ENCODE measurements at regions of chr2 and their contacts with region 1.

Region 1: DNA sequence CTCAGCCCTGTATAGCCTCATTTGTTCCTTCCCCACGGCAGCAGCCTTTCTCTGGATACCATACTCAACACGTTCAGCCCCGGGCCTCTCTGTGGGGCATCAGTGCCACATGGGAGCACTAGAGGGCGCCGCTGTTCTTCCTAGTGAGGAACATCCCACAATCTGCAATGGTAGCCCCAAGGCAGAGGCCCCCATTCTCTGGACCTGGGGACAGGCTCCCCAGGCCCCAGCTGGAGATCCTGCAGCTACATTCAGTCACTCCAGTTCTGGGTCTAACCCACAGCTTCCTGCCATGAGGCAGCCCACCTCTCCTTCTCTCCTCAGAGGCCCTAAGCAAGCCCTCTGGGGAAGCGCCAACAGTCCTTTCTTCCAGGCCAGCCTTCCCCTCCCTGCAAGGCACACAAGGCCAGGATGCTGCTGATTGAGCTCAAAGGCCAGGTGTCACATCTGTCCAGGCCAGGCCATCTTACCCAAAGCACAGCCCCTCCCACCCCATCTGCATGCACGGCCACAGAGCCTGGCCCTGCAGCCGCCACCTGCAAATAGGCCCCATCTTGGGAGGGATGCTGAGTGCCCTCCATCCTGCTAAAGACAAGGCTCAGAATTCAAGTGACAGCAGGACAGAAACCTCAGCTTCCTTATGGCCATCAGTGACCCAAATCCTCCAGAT is 14.3 kb upstream of the SFXN5 start:
- DNase-seq: peak; percentile 79 to 81
- H3K4me3 ChIP-seq: no peak overlapping the region
- H3K27ac ChIP-seq: no peak overlapping the region
- H3K4me1 ChIP-seq: no peaks in the 10 kb centered on the region
- H3K27me3 ChIP-seq: no peaks in the 10 kb centered on the region
- CTCF ChIP-seq: peak; percentile 82 to 92 (median 86)
- POLR2A ChIP-seq: no peak

Region 2: DNA sequence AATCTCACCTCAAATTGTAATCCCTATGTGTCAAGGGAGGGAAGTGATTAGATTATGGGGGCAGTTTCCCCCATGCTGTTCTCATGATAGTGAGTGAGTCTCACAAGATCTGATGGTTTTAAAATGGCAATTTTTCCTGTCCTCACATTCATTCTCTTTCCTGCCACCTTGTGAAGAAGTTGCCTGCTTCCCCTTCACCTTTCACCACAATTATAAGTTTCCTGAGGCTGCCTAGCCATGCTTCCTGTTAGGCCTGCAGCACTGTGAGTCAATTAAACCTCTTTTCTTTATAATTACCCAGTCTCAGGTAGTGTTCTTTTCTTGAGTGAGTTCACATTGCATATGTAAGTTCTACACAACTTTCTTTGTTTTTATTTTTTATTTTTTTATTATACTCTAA is 531.4 kb before region 1 on chr2:
- intact Hi-C with region 1: no loop called
- DNase-seq: no peak
- H3K4me3 ChIP-seq: no peak overlapping the region
- H3K27ac ChIP-seq: no peak overlapping the region
- H3K4me1 ChIP-seq: no peaks in the 10 kb centered on the region
- H3K27me3 ChIP-seq: no peaks in the 10 kb centered on the region
- CTCF ChIP-seq: no peak
- POLR2A ChIP-seq: no peak

Region 3: DNA sequence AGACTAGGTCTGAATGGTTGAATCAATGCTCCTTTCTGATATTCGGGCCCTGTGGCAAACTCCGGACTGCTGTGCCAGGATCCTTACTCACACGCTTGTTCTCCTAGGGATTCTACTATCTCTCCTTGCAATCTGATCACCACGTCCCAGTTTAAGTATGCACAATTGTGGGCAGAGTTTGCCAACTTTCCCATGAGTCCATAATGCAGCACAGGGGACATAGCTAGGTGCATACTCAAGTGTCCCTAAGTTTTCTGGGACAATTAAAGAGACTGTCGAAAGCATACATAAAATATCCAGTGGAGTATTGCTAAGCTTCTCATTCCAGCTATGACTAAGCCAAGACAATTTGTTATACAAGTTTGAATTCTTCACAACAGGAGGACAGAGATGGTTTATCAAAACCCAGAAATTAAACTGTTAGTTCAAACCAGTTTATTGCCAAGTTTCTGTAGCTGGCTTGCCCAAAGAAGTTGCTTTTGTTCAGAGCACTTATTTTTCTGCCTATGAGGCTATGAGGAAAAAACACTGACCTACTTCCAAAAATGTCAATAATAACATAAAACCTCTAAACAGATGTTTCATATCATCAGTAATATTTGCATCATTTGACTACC is 396.1 kb before region 1 on chr2:
- intact Hi-C with region 1: no loop called
- DNase-seq: no peak
- H3K4me3 ChIP-seq: no peak overlapping the region
- H3K27ac ChIP-seq: no peak overlapping the region
- H3K4me1 ChIP-seq: no peaks in the 10 kb centered on the region
- H3K27me3 ChIP-seq: no peaks in the 10 kb centered on the region
- CTCF ChIP-seq: no peak
- POLR2A ChIP-seq: no peak

Region 4: DNA sequence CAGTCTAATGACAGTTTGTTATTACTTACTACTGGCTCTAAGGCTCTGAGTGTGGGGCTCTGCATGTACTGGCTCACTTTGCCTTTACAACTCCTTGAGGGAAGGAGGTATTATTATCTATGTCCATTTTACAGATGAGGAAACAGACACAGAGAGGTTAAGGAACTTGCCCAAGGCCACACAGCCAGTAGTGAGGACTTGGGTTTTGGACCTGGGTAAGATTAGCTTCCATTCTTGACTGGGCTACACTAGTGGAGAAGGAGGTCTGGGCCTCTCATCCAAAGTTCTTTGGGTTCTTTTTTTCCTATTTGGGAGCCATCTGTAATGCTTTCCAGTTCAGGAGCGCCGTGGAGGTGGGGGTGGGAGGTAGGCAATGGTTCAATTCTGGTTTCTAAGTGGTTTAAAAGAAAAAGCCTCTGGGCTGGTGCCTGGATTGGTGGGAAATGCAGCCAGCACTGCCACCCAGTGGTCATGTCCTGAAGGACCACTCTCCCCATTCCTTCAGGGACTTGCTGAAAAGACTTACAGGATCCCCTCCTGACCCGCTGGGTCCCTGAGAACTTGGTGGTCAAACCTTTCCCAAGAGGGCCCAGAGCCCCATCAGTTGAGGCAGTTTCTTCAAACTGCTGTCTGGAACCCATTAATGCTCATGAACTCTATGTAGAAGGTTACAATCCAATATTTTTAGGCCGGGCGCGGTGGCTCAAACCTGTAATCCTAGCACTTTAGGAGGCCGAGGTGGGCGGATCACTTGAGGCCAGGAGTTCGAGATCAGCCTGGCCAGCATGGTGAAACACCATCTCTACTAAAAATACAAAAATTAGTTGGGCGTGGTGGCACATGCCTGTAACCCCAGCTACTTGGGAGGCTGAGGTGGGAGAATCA is 77.9 kb after region 1 on chr2:
- intact Hi-C with region 1: loop called (anchors 5 kb)
- DNase-seq: peak; percentile 58 to 71
- H3K4me3 ChIP-seq: no peak overlapping the region
- H3K27ac ChIP-seq: no peak overlapping the region
- H3K4me1 ChIP-seq: no peaks in the 10 kb centered on the region
- H3K27me3 ChIP-seq: no peaks in the 10 kb centered on the region
- CTCF ChIP-seq: peak; percentile 72 to 83 (median 78)
- POLR2A ChIP-seq: no peak

Region 5: DNA sequence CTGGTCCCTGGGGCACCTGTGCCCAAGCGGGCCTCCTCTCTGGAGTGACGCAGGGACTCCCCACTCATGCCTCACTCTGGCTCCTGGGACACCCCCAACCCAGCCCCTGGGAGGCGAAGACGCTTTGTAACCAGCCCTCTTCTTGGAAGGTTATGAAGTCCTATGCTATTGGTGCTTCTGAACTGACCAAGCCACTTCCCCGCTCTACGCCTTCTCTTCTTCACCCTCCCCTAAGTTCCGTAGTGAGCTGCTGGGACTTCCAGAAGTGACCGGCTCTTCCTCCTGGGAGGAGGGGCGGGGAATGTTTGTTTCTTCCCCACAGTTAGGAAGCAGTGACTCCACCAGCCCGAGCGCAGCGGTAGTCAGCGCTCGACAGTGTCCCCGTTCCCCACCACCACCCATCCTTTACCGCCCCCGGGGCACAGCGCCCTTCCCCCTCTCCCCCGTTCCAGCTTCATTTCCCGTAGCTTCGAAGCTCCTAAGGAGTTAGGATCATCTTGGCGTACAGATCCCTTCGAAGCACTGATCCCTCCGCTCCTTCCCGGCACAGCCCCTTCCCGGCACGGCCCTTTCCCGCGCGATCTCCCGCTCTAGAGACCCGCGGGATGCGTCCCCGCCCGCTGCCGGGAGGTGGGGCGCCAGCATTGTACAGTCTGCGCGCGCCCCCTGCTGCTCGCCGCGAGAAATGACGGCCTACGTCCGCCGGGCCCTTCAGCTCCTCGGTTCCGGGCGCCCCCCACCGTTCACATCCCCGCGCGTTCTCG is 91.2 kb after region 1 on chr2:
- intact Hi-C with region 1: loop called (anchors 5 kb)
- DNase-seq: peak; percentile 89 to 91
- H3K4me3 ChIP-seq: peak overlapping the region; percentile 42 to 47
- H3K27ac ChIP-seq: peak overlapping the region; percentile 62 to 72
- H3K4me1 ChIP-seq: peaks cover 0 to 11% of the 10 kb centered on the region in 2 donors
- H3K27me3 ChIP-seq: peaks cover 0 to 12% of the 10 kb centered on the region in 2 donors
- CTCF ChIP-seq: peak; percentile 99
- POLR2A ChIP-seq: peak; percentile 19 to 22